Vagina (tissue), 2 donors: ENCODE measurements at regions of chr4 and their contacts with region 1.

Region 1: GRCh38 chr4:158962393-158962792 is 140.5 kb upstream of the RAPGEF2 start:
- DNase-seq: no peak
- H3K4me3 ChIP-seq: no peak overlapping the region
- H3K27ac ChIP-seq: no peak overlapping the region
- H3K4me1 ChIP-seq: no peaks in the 10 kb centered on the region
- H3K27me3 ChIP-seq: no peaks in the 10 kb centered on the region
- CTCF ChIP-seq: no peak
- POLR2A ChIP-seq: no peak

Region 2: GRCh38 chr4:158805619-158806471 is 156.5 kb before region 1 on chr4:
- intact Hi-C with region 1: no loop called
- DNase-seq: peak in 1 of 2 donors; percentile 92
- H3K4me3 ChIP-seq: no peak overlapping the region
- H3K27ac ChIP-seq: no peak overlapping the region
- H3K4me1 ChIP-seq: peaks cover 66% of the 10 kb centered on the region
- H3K27me3 ChIP-seq: no peaks in the 10 kb centered on the region
- CTCF ChIP-seq: no peak
- POLR2A ChIP-seq: no peak

Region 3: DNA sequence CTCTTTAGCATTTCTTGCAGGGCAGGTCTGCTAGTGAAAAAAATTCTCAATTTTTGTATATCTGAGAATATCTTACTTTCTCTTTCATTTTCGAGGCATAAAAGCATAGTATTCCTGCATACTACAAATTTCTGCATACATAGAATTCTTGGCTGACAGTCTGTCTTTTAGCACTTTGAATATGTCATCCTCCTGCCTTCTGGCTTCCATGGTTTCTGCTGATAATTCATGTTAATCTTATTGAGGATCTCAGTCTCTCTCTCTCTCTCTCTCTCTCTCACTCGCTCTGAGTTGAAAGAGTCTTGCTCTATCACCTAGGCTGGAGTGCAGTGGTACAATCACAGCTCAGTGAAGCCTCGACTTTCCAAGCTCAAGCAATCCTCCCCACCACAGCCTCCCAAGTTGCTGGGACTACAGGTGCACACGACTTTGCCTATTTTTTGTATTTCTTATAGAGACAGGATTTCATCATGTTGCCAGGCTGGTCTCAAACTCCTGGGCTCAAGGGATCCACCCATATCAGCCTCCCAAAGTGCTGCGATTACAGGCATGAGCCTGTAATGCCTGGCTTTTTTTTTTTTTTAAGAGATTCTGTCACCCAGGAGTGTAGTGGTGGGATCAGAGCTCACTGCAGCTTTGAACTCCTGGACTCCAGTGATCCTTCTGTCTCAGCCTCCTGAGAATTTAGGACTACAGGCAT is 32.3 kb before region 1 on chr4:
- intact Hi-C with region 1: loop called (anchors 2 kb)
- DNase-seq: no peak
- H3K4me3 ChIP-seq: no peak overlapping the region
- H3K27ac ChIP-seq: no peak overlapping the region
- H3K4me1 ChIP-seq: no peaks in the 10 kb centered on the region
- H3K27me3 ChIP-seq: no peaks in the 10 kb centered on the region
- CTCF ChIP-seq: no peak
- POLR2A ChIP-seq: no peak